Testis (tissue), 5 donors: ENCODE measurements at regions of chr17 and their contacts with region 1.

Region 1: GRCh38 chr17:5584383-5585286 is at the start of gene NLRP1:
- DNase-seq: peak; percentile 62
- H3K4me3 ChIP-seq: peak within 1 kb of the TSS; percentile 15 to 35
- H3K27ac ChIP-seq: peak within 1 kb of the TSS in 1 of 2 donors; percentile 77
- H3K4me1 ChIP-seq: no peaks in the 10 kb centered on the region
- H3K27me3 ChIP-seq: no peaks in the 10 kb centered on the region
- CTCF ChIP-seq: no peak
- POLR2A ChIP-seq: no peak
- total RNA-seq, gene NLRP1: 35.4 to 68.5 TPM

Region 2: DNA sequence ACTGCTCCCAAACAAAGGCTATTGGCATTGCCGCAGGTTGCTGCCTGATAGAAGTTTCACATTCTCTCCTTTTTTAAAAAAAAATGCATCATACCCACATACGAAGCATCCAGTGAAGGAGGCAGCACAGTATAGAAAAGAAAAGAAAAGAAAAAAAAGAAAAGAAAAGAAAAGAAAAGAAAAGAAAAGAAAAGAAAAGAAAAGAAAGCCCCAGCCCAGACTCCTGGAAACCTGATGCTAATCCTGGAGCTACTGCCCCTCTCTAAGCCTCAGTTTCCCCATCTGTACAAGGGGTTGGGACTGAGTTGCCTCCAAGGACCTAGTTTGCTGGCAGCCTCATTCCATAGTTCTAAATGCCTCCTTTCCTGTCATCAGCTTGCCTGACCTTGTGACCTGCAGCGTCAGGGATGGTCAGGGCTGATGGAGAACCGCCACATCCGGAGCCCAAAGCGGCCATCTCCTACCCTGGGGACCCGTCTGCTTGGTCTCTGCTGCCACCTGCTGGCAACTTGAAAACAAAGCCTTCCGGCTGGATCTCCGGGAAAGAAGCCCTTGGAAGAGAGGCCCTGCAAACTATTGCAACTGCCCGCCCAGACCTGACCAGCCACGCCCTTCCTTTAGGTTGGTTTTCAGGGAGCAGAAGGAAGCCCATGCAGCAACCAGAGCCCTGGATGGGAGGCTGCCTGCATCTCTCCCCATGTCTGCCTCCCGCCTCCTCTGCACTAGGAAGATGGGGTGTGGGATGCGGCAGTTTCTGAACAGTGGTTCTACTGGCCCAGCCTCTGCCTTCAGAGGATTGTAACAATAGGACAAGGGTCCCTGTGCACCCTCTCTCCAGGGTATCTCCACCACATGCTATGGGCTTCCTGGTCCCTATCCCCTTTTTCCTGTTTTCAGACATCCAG is 837.3 kb after region 1 on chr17:
- intact Hi-C with region 1: loop called (anchors 5 kb)
- DNase-seq: peak; percentile 85
- H3K4me3 ChIP-seq: no peak overlapping the region
- H3K27ac ChIP-seq: no peak overlapping the region
- H3K4me1 ChIP-seq: no peaks in the 10 kb centered on the region
- H3K27me3 ChIP-seq: no peaks in the 10 kb centered on the region
- CTCF ChIP-seq: peak; percentile 75 to 83 (median 77)
- POLR2A ChIP-seq: no peak